ENCODE measurements at regions of chr6 and their contacts with region 1.

Region 1: GRCh38 chr6:134152767-134153485 is 100.5 kb upstream of the SLC2A12 start:
- DNase-seq: peak in 4 of 5 donors; percentile 53 to 59 (median 57)
- H3K4me3 ChIP-seq: no peak overlapping the region
- H3K27ac ChIP-seq: no peak overlapping the region
- H3K4me1 ChIP-seq: peaks cover 0 to 4% (median 0%) of the 10 kb centered on the region in 3 donors
- H3K27me3 ChIP-seq: no peaks in the 10 kb centered on the region
- CTCF ChIP-seq: no peak

Region 2: DNA sequence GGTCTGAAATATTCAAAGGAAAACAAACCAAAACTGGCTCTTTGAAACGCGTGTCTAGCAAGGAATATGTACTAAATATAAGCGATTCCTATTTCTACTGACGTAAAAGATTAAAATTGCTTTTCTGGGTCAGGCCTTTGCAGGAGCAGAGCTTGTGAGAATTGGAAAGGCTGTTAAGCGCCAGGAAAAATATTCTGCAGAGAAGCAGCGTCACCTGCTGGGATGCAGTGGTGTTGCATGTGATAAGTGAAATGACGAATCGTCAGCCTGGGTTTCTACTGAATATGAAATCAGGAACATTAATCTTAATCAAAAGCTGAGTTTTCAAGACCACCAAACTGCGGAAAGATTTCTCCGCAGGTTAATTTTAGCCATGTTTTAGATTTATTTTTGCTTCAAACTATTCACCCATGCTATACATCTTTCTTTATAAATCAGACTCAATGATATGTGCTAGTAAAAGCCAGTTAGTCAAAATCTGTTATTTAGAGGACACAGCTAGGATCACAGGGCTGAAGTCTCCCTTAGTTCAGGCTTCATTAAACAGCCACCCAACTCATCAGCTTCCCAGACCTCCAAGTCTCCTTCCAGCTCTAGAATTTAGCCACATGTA is 729.6 kb after region 1 on chr6:
- intact Hi-C with region 1: loop called (anchors 10 kb)
- DNase-seq: peak in 4 of 5 donors; percentile 60 to 73 (median 72)
- H3K4me3 ChIP-seq: no peak overlapping the region
- H3K27ac ChIP-seq: no peak overlapping the region
- H3K4me1 ChIP-seq: no peaks in the 10 kb centered on the region
- H3K27me3 ChIP-seq: no peaks in the 10 kb centered on the region
- CTCF ChIP-seq: peak; percentile 97